ENCODE measurements at regions of chr13 and their contacts with region 1.

Region 1: GRCh38 chr13:72696579-72696978 is 30.9 kb downstream of the MZT1 start:
- DNase-seq: no peak
- H3K4me3 ChIP-seq: no peak overlapping the region
- H3K27ac ChIP-seq: no peak overlapping the region
- H3K4me1 ChIP-seq: no peaks in the 10 kb centered on the region
- H3K27me3 ChIP-seq: no peaks in the 10 kb centered on the region
- CTCF ChIP-seq: no peak
- EP300 ChIP-seq: no peak
- POLR2A ChIP-seq: no peak

Region 2: GRCh38 chr13:70960841-70961443 is 1735.6 kb before region 1 on chr13:
- intact Hi-C with region 1: loop called in 1 of 4 experiments (anchors 10 kb)
- DNase-seq: no peak
- H3K4me3 ChIP-seq: no peak overlapping the region
- H3K27ac ChIP-seq: no peak overlapping the region
- H3K4me1 ChIP-seq: no peaks in the 10 kb centered on the region
- H3K27me3 ChIP-seq: no peaks in the 10 kb centered on the region
- CTCF ChIP-seq: no peak
- EP300 ChIP-seq: no peak
- POLR2A ChIP-seq: no peak

Region 3: DNA sequence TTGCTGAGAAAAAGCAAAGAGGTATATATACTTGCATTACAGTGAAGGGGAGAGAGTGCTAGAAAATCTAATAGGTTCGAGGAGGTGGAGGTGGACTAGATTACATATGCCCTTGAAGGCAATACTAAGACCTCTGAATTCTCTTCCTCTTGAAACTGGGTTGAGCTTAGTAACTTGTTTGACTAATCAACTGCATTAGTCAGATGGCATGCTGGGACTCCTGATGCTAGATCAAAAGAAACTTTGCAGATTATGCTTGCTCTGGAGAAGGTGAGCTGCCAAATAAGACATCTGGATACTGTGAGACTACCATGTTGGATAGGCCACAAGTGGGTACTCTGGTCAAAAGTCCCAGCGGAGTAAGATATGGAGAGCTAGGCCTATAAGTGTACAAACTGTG is 693.5 kb after region 1 on chr13:
- intact Hi-C with region 1: no loop called
- DNase-seq: no peak
- H3K4me3 ChIP-seq: no peak overlapping the region
- H3K27ac ChIP-seq: no peak overlapping the region
- H3K4me1 ChIP-seq: no peaks in the 10 kb centered on the region
- H3K27me3 ChIP-seq: no peaks in the 10 kb centered on the region
- CTCF ChIP-seq: no peak
- EP300 ChIP-seq: no peak
- POLR2A ChIP-seq: no peak